Pancreas (tissue), 10 donors: ENCODE measurements at regions of chr15 and their contacts with region 1.

Region 1: GRCh38 chr15:91271565-91272153 is 171.6 kb downstream of the SV2B start:
- DNase-seq: peak in 4 of 6 donors; percentile 23 to 62 (median 30)
- ATAC-seq: peak; percentile 53 to 92 (median 87)
- H3K4me3 ChIP-seq: no peak overlapping the region
- H3K27ac ChIP-seq: no peak overlapping the region
- H3K4me1 ChIP-seq: no peaks in the 10 kb centered on the region
- H3K27me3 ChIP-seq: peaks cover 0 to 4% (median 0%) of the 10 kb centered on the region in 4 donors
- CTCF ChIP-seq: peak; percentile 66 to 75 (median 70)

Region 2: DNA sequence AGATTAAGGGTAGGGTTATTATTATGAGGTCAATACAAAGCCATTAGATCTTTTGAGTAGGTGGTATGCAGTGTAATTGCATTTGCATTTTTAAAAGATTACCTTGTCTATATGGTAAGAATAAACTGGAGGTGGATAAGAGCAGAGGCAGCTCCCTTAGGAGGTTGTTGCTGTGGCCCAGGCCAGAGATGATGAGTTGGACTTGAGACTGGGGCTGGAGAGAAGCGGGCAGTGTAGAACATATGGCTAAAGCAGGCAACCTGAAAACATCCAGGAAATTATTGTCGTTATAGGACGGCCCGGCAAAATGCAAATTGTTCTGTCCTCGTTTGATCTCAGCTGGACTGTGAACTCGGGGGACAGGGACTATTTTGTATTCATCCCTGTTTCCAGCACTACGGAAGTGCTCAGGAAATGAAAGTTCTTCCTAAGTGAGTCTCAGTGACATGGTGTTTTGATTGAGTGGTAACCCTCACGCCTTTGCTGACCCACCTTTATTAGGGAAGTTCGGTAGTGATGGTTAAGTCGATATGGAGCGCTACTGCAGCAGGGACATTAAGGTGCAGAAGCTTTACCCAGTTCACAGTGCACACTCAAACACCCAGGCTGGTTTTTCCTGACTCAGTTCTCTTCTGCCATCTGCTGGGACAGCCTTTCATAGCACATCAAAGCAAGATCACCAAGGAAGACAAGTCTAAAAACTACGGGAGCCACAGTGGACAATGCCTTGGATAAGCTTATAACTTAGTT is 222.1 kb before region 1 on chr15:
- intact Hi-C with region 1: loop called in 2 of 3 experiments (anchors 5 to 10 kb)
- DNase-seq: peak in 3 of 6 donors; percentile 45 to 76 (median 49)
- ATAC-seq: peak; percentile 90 to 99 (median 97)
- H3K4me3 ChIP-seq: no peak overlapping the region
- H3K27ac ChIP-seq: no peak overlapping the region
- H3K4me1 ChIP-seq: no peaks in the 10 kb centered on the region
- H3K27me3 ChIP-seq: no peaks in the 10 kb centered on the region
- CTCF ChIP-seq: peak in 3 of 4 donors; percentile 26 to 50 (median 34)